RWPE1 (cell line): ENCODE measurements at regions of chr4 and their contacts with region 1.

Region 1: DNA sequence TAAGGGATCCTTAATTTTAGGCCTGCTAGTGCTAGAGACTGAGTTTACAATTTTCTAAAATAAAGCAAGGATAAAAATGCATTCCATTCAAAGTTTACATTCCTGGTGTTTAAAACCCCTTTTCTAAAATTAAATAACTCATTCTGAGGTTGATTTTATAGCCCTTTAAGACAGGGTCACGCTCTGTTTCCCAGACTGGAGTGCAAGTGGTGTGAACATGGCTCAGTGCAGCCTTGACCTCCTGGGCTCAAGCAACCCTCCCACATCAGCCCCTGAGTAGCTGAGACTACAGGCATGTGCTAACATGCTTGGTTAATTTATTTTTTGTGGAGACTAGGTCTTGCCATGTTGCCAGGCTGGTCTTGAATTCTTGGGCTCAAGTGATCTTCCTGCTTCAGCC is 6.8 kb upstream of the CDKL2 start:
- DNase-seq: no peak
- H3K27ac ChIP-seq: no peak overlapping the region
- CTCF ChIP-seq: no peak

Region 2: DNA sequence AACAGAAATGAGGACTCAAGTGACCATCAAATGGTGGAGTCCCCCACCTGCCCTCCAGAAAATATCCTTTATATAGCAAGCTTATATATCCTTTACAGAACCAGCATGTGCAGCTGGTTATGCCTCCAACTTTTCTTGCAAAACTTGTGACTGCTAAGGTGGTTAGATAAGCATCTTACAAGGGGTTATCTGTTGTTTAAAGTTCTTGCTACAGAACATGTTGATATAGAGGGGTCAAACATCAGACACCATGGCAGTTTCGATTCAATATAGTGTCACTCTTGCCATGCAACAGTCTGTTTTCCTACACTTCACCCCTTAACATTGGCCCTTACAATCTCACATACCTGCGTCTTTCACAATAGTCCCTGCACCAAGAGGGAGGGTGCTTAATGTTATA is 182.7 kb before region 1 on chr4:
- CTCF ChIA-PET with region 1: no interaction called
- POLR2A ChIA-PET with region 1: no interaction called
- DNase-seq: no peak
- H3K27ac ChIP-seq: no peak overlapping the region
- CTCF ChIP-seq: no peak

Region 3: GRCh38 chr4:75469896-75470295 is 167.3 kb before region 1 on chr4:
- CTCF ChIA-PET with region 1: no interaction called
- POLR2A ChIA-PET with region 1: interaction called, 10 read pairs
- DNase-seq: no peak
- H3K27ac ChIP-seq: no peak overlapping the region
- CTCF ChIP-seq: no peak